ENCODE measurements at regions of chr16 and their contacts with region 1.

Region 1: DNA sequence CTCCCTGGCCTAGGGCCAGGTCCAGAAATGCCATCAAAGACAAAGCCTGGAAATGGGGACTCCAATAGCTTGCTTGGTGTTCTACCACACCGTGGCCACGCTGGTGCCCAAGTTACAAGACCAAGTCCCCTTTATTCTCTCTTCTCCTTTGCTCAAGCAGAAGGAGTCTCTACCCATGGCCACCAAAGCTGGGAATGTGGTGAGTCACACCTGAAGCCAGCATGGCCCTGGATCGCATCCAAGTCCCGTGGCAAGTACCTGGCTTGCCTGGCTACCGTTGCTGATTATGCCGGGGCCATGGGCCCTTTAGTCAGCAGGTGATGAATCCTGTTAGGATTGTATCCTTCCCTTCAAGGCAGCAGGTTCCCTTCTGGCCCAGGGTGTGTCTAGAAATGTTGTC is 260.0 kb downstream of the HAPSTR1 start:
- DNase-seq: no peak
- ATAC-seq: peak in 1 of 2 donors; percentile 24
- H3K4me3 ChIP-seq: no peak overlapping the region
- H3K27ac ChIP-seq: no peak overlapping the region
- H3K4me1 ChIP-seq: peaks cover 1% of the 10 kb centered on the region
- H3K27me3 ChIP-seq: no peaks in the 10 kb centered on the region

Region 2: GRCh38 chr16:9578459-9578858 is 227.0 kb after region 1 on chr16:
- intact Hi-C with region 1: loop called in 1 of 4 experiments (anchors 5 kb)
- DNase-seq: no peak
- ATAC-seq: no peak
- H3K4me3 ChIP-seq: no peak overlapping the region
- H3K27ac ChIP-seq: no peak overlapping the region
- H3K4me1 ChIP-seq: no peaks in the 10 kb centered on the region
- H3K27me3 ChIP-seq: no peaks in the 10 kb centered on the region

Measured in right cardiac atrium (tissue), 5 donors.